Right ventricle myocardium superior (tissue), 1 donor: ENCODE measurements at regions of chr6 and their contacts with region 1.

Region 1: DNA sequence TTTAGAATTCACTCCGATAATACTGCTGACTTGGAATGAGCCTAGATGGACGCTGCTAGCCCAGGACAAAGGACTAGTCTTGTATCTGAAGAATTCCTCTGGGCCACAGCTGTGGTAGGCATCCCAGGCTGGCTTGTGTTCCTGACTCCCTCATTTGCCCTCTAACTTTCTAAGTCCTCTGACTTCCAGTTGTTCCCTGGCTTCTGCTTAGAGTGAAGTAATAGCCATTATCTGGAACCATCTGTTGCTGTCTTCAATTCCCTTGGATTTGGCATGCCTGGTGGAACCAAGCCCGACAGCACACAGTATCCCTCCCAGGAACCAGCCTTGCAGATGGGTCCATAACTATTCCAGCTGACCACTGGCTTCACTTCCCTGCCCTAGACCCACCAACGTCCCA is 376.0 kb downstream of the SYNE1 start:
- DNase-seq: peak; percentile 53
- ATAC-seq: peak; percentile 81

Region 2: GRCh38 chr6:152220786-152221185 is 40.4 kb before region 1 on chr6:
- intact Hi-C with region 1: loop called (anchors 2 kb)
- DNase-seq: no peak
- ATAC-seq: peak; percentile 94